ENCODE measurements at regions of chr2 and their contacts with region 1.

Region 1: GRCh38 chr2:99337113-99338028 is at the start of gene EIF5B:
- DNase-seq: peak; percentile 96 to 97
- H3K4me3 ChIP-seq: peak within 1 kb of the TSS; percentile 94
- H3K4me3 Mint-ChIP-seq: no peak within 1 kb of the TSS
- H3K27ac Mint-ChIP-seq: no peak within 1 kb of the TSS
- H3K4me1 ChIP-seq: peaks cover 24% of the 10 kb centered on the region
- H3K4me1 Mint-ChIP-seq: no peaks in the 10 kb centered on the region
- H3K27me3 ChIP-seq: no peaks in the 10 kb centered on the region
- H3K27me3 Mint-ChIP-seq: no peaks in the 10 kb centered on the region
- CTCF ChIP-seq: peak; percentile 54 to 80
- total RNA-seq, gene EIF5B: 71.5 and 79.5 TPM in 2 replicates

Region 2: GRCh38 chr2:99141110-99142108 is 196.0 kb before region 1 on chr2 and contains the start of gene C2orf15:
- CTCF ChIA-PET with region 1: interaction called, 3 read pairs
- POLR2A ChIA-PET with region 1: interaction called, 12 read pairs
- intact Hi-C with region 1: loop called (anchors 2 kb)
- DNase-seq: peak; percentile 98 to 99
- H3K4me3 ChIP-seq: peak within 1 kb of the TSS; percentile 75
- H3K4me3 Mint-ChIP-seq: peak within 1 kb of the TSS; percentile 98
- H3K27ac Mint-ChIP-seq: peak within 1 kb of the TSS; percentile 94
- H3K4me1 ChIP-seq: peaks cover 12% of the 10 kb centered on the region
- H3K4me1 Mint-ChIP-seq: peaks cover 20% of the 10 kb centered on the region
- H3K27me3 ChIP-seq: no peaks in the 10 kb centered on the region
- H3K27me3 Mint-ChIP-seq: no peaks in the 10 kb centered on the region
- CTCF ChIP-seq: no peak
- total RNA-seq, gene C2orf15: 11.3 and 12.5 TPM in 2 replicates

Region 3: GRCh38 chr2:99180755-99181623 is 156.4 kb before region 1 on chr2 and contains the starts of genes MITD1 and MRPL30:
- CTCF ChIA-PET with region 1: no interaction called
- POLR2A ChIA-PET with region 1: interaction called, 5 read pairs
- intact Hi-C with region 1: loop called (anchors 1 kb)
- DNase-seq: peak; percentile 94
- H3K4me3 ChIP-seq: peak within 1 kb of the TSS; percentile 87
- H3K4me3 Mint-ChIP-seq: peak within 1 kb of the TSS; percentile 92
- H3K27ac Mint-ChIP-seq: peak within 1 kb of the TSS; percentile 84
- H3K4me1 ChIP-seq: peaks cover 28% of the 10 kb centered on the region
- H3K4me1 Mint-ChIP-seq: peaks cover 9% of the 10 kb centered on the region
- H3K27me3 ChIP-seq: no peaks in the 10 kb centered on the region
- H3K27me3 Mint-ChIP-seq: no peaks in the 10 kb centered on the region
- CTCF ChIP-seq: no peak
- total RNA-seq, gene MITD1: 29.3 and 30.5 TPM in 2 replicates
- total RNA-seq, gene MRPL30: 49.9 and 51.2 TPM in 2 replicates

Region 4: GRCh38 chr2:99403524-99403923 is 66.2 kb after region 1 on chr2:
- CTCF ChIA-PET with region 1: interaction called, 10 read pairs
- POLR2A ChIA-PET with region 1: interaction called, 3 read pairs
- intact Hi-C with region 1: no loop called
- DNase-seq: peak in 1 of 2 experiments; percentile 42
- H3K4me3 ChIP-seq: no peak overlapping the region
- H3K4me3 Mint-ChIP-seq: no peak overlapping the region
- H3K27ac Mint-ChIP-seq: peak overlapping the region; percentile 59
- H3K4me1 ChIP-seq: peaks cover 10% of the 10 kb centered on the region; the same call in 1 of the 2 replicates
- H3K4me1 Mint-ChIP-seq: peaks cover 16% of the 10 kb centered on the region
- H3K27me3 ChIP-seq: no peaks in the 10 kb centered on the region
- H3K27me3 Mint-ChIP-seq: no peaks in the 10 kb centered on the region
- CTCF ChIP-seq: peak; percentile 14 to 48

Measured in Caco-2 (cell line).